Activated T-helper 1 cell treated with anti-CD3 and anti-CD28 coated beads, Interleukin-12 subunit alpha, Interleukin-12 subunit beta, Interleukin-2, Interleukin-4 antibody, amounts not matched to agents 30 ng/mL and 10 ng/mL and 1 ng/mL, durations not matched to agents 14 hours and 24 hours and 36 hours (primary cell): ENCODE measurements at regions of chr4 and their contacts with region 1.

Region 1: DNA sequence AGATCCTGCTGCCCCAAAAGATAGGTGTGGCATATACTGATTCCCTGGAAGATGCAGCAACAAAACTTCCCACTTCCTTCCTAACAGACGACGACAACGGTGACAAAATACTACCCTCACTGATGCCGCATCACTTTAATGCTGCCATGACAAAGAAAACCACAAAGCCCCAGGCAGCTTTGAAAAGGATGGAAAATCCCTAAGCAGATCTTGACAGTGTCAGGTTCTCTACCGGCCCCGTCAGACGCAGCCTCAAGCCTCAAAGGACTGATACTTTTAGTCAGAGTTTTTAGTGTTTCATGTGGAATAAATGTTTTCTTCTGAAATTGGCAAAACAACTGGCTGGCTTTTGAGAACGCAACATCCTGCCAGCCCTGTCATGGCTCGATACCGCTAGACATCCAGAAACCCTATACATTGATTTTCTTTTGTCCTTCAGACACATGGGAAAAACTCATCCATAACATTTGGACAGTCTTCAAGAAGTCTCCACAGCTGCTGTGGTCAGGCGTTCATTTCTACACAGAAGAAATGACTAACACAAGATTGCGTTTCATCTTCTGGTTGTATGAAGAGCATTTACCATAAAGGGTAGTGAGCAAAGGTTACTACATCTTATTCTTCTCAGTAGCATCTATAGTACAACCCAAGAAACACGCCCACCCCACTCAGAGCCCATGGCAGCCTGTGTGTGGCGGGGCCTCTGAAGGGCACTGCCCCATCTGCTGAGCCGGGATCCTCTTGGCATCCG is 60.1 kb downstream of the GATB start:
- DNase-seq: peak; percentile 9
- H3K4me3 Mint-ChIP-seq: no peak overlapping the region
- H3K27ac Mint-ChIP-seq: peak overlapping the region; percentile 56
- H3K4me1 Mint-ChIP-seq: peaks cover 8% of the 10 kb centered on the region
- H3K27me3 Mint-ChIP-seq: no peaks in the 10 kb centered on the region

Region 2: DNA sequence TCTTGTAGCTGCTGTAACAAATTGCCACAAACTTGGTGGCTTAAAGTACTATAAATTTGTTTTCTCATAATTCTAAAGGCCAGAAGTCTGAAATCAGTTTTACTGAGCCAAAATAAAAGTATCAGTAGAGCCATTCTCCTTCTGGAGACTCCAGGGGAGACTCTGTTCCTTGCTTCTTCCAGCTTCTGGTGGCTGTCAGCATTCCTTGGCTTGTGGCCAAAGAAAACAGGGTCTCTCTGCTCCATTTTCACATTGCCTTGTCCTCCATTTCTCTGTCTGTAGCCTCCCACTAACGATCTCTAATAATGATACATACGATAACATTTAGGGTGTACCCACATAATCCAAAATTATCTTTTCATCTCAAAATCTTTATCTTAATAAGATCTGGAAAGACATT is 918.4 kb before region 1 on chr4:
- intact Hi-C with region 1: no loop called
- DNase-seq: no peak
- H3K4me3 Mint-ChIP-seq: no peak overlapping the region
- H3K27ac Mint-ChIP-seq: no peak overlapping the region
- H3K4me1 Mint-ChIP-seq: no peaks in the 10 kb centered on the region
- H3K27me3 Mint-ChIP-seq: no peaks in the 10 kb centered on the region

Region 3: DNA sequence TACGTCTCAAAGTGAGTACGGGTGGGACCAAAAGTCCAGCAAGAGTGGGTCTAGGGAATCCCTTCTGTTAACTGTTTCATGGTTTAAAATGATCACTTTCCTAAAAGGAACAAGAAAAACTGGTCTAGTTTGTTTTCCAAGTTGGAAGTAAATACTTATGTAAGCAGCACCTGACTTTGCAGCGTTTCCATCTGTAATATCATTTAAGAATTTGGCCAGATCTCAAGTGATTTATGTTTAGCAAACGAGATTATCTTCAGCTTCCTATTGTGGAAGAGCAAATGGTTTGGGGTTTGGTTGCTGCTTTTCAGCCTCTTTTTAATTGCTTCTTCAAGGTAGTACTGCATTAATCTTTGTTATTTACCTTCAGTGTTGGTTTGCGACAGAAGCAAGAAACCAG is 241.4 kb before region 1 on chr4:
- intact Hi-C with region 1: no loop called
- DNase-seq: no peak
- H3K4me3 Mint-ChIP-seq: no peak overlapping the region
- H3K27ac Mint-ChIP-seq: no peak overlapping the region
- H3K4me1 Mint-ChIP-seq: no peaks in the 10 kb centered on the region
- H3K27me3 Mint-ChIP-seq: peaks cover 8% of the 10 kb centered on the region

Region 4: DNA sequence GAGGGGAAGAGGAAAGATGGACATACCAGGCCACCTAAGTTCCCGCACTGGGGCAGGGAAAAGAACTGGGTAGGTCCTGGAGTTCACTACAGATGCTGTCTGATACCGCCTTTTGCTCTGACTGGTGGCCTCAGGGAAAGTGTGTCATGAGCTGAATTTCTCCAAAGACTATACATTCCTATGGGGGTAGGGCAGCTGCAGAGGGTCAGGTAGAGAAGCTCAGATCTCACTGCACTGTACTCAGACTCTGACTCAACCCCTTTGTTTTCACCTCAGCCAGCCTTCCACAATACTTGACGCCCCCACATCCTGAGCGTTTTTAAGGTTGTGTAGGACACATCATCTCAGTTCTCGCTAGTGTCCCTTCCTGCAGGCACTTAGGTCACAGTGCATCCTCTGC is 52.3 kb after region 1 on chr4:
- intact Hi-C with region 1: loop called (anchors 2 kb)
- DNase-seq: no peak
- H3K4me3 Mint-ChIP-seq: no peak overlapping the region
- H3K27ac Mint-ChIP-seq: peak overlapping the region; percentile 18
- H3K4me1 Mint-ChIP-seq: peaks cover 18% of the 10 kb centered on the region
- H3K27me3 Mint-ChIP-seq: no peaks in the 10 kb centered on the region

Region 5: DNA sequence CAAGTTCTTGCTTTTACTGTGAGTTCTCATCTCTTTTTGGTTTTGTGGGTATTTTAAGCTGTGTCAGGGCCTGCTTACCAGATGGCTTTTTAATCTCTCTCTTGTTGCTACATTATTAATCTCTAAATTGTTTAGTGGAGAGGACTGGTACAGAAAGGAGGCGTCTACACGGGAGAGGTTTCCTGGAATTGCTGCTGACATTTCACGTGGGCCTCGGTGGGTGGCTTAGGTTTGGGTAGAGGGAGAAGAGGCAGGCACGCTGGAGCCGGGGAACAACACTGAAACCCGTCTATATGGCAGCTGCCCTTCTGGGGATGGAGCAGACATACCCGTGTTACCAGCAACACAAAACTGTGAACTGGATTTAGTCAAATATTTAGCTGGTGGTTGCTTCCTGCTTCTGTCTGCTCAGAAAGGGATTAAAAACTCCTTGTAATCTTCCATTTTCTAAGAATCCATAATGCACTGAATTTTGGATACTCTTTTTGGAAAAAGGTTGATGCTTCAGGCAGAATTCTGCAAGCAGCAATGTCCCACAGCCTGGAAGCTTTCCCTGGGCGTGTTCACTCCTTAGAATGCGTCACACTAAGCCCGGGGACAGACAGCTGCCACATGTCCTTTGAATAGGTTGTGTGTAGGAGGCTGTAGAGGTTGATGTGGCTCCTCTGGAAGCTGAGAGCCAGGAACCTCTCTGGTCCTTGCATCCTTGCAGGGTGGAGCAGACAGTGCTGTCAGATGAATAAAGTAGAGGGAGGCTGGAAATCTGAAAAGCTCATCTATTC is 259.9 kb after region 1 on chr4:
- intact Hi-C with region 1: no loop called
- DNase-seq: no peak
- H3K4me3 Mint-ChIP-seq: no peak overlapping the region
- H3K27ac Mint-ChIP-seq: no peak overlapping the region
- H3K4me1 Mint-ChIP-seq: no peaks in the 10 kb centered on the region
- H3K27me3 Mint-ChIP-seq: peaks cover 4% of the 10 kb centered on the region